SK-N-SH (cell line): ENCODE measurements at regions of chr17 and their contacts with region 1.

Region 1: DNA sequence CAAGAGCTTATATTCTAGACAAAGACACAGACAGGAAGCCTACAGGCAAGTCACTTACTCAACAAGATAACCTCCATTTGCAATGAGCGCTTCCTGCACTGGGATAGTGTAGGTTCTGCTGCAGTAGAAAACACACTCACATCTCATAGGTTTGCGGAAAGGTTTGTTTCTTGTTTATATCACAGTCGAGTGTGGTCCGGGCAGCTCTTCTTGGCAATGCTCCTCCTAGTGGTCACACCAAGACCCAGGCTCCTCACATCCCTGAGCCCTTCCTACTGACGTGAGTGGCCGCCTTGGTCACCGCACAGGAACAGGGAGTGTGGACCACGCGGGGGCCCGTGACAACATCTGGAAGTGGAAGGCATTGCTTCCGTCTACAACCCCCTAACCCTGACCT is 48.0 kb upstream of the RBFOX3 start:
- DNase-seq: peak; percentile 77
- H3K4me3 ChIP-seq: peak overlapping the region in 1 of 2 experiments; percentile 23; a peak in 1 of 4 replicates
- H3K27ac ChIP-seq: no peak overlapping the region
- H3K4me1 ChIP-seq: no peaks in the 10 kb centered on the region; a peak in 1 of 4 replicates
- H3K27me3 ChIP-seq: peaks cover 14% of the 10 kb centered on the region; the same call in 1 of the 2 replicates
- CTCF ChIP-seq: peak; percentile 45
- EP300 ChIP-seq: no peak
- RAD21 ChIP-seq: peak; percentile 55

Region 2: DNA sequence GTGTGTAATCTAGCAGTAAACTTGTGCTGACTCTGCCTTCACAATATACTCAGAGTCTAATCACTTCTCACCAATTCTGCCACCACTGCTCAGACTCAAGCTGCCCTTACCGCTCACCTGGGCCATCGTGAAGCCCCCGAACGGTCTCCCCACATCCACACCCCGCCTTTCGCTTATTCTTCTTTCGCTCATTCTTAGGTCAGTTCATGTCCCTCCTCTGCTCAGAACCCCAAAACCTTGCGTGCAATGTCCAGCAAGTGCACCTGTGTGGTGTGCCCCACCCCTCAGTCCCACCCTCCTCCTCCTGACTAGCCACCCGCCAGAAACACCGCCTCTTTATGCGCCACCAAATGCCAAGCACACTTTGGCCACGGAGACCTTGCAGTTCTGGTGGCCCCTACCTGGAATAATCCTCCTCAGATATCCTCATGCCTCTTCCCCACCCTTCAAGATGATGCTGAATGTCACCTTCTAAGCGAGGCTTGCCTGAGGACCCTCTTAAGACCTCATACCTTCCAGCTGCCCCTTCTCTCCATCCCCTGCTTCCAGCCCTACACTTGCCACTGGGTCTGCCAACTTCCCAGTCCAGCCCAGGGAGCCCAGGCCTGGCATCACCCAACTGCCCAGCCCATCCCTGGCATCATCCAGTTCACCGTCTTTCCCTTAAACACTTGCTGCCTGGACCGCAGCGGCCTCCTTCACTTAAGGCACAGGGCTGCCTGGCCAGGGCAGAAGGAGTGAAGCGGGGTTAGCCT is 13.6 kb before region 1 on chr17:
- CTCF ChIA-PET with region 1: interaction called, 12 read pairs
- POLR2A ChIA-PET with region 1: no interaction called
- DNase-seq: peak; percentile 14
- H3K4me3 ChIP-seq: no peak overlapping the region
- H3K27ac ChIP-seq: no peak overlapping the region
- H3K4me1 ChIP-seq: no peaks in the 10 kb centered on the region
- H3K27me3 ChIP-seq: no peaks in the 10 kb centered on the region
- CTCF ChIP-seq: no peak
- EP300 ChIP-seq: no peak
- RAD21 ChIP-seq: no peak

Region 3: GRCh38 chr17:79695797-79696609 is 37.2 kb after region 1 on chr17:
- CTCF ChIA-PET with region 1: interaction called, 14 read pairs
- POLR2A ChIA-PET with region 1: no interaction called
- DNase-seq: peak; percentile 75
- H3K4me3 ChIP-seq: no peak overlapping the region
- H3K27ac ChIP-seq: no peak overlapping the region
- H3K4me1 ChIP-seq: peaks cover 0 to 11% of the 10 kb centered on the region in 2 experiments; a peak in 2 of 4 replicates
- H3K27me3 ChIP-seq: 0 out of 2 replicates have a peak, but pooled peaks cover 6% of the 10 kb centered on the region
- CTCF ChIP-seq: no peak
- EP300 ChIP-seq: no peak
- RAD21 ChIP-seq: no peak